ENCODE measurements at regions of chr7 and their contacts with region 1.

Region 1: GRCh38 chr7:50954716-50955115 is 172.0 kb upstream of the GRB10 start:
- DNase-seq: no peak
- H3K4me3 ChIP-seq: no peak overlapping the region
- H3K27ac ChIP-seq: no peak overlapping the region
- H3K4me1 ChIP-seq: no peaks in the 10 kb centered on the region
- H3K27me3 ChIP-seq: no peaks in the 10 kb centered on the region
- CTCF ChIP-seq: no peak

Region 2: GRCh38 chr7:50544992-50545391 is 409.7 kb before region 1 on chr7:
- CTCF ChIA-PET with region 1: no interaction called
- dilution Hi-C with region 1: no loop called
- in situ Hi-C with region 1: no loop called
- intact Hi-C with region 1: no loop called
- DNase-seq: no peak
- H3K4me3 ChIP-seq: no peak overlapping the region
- H3K27ac ChIP-seq: no peak overlapping the region
- H3K4me1 ChIP-seq: no peaks in the 10 kb centered on the region
- H3K27me3 ChIP-seq: no peaks in the 10 kb centered on the region
- CTCF ChIP-seq: no peak

Region 3: DNA sequence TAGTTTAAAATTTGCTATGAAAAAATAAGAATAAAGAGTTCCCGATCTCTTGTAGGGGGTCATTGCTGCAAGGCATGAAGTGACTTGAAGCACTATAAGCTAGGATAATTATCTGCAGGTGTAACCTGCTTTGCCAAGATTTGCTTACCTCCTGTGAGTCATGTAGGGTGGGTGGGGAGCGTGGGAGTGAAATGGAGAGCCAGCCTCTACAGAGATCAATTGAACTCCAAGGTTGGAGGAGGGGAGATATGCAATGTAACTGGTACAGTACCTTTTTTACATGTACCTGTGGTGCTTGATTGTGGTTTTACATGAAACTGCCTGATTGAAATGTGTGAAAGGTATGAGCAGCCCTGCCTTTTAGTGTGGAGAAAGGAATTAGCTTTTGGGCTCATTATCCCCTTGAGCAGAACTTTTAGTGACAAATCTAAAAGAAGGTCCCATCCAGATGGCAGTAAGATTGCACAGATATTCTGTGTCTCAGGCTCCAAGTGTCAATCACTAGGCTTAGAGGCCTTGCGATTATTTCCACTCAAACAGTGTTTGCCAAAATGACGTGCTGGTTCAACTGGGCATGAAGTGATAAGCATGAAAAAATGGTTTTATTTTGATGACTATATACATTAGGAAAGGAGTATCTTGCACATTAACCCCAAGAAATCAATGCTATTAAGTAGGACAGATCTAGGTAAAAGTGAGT is 33.5 kb before region 1 on chr7:
- CTCF ChIA-PET with region 1: no interaction called
- dilution Hi-C with region 1: loop called (anchors 5 kb)
- in situ Hi-C with region 1: no loop called
- intact Hi-C with region 1: no loop called
- DNase-seq: peak; percentile 16
- H3K4me3 ChIP-seq: no peak overlapping the region
- H3K27ac ChIP-seq: no peak overlapping the region
- H3K4me1 ChIP-seq: peaks cover 4% of the 10 kb centered on the region
- H3K27me3 ChIP-seq: no peaks in the 10 kb centered on the region
- CTCF ChIP-seq: no peak

Region 4: DNA sequence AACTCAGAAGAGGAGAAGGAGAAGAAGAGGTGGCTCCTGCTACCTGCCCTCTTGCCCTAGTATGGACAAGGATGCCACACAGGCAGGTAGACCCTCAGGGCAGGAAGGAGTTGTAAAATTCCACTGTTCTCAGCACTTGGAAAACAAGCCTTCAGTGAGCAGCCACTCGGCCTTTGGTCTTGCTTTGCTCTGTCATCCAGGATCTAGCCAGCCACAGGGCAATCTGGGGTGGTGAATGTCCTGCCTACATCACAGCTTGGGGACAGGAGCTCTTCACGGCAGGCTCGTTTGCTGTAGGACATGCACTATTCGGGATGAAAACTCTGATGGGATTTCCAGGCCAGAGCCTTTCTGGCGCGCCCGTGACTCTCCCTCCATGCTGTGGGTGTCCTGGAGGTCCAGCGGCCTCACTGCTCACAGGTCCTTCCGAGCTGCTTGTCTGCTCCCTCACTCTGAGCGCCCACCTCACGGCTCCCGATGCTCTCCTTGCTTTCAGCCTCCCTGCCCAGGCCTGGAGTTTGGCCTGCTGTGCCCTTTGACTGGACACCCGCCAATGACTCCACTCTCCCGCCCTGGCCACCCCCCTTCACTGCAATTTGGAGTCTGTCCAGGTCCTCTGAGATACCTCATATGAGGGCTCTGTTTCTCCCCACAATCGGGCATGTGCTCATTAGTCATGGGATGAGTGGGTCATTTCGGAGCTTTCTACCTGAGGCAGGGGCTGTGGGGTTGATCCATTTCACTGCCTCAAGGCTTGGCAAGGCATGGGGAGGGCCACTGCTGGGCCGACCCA is 55.2 kb after region 1 on chr7:
- CTCF ChIA-PET with region 1: no interaction called
- dilution Hi-C with region 1: loop called (anchors 5 kb)
- in situ Hi-C with region 1: no loop called
- intact Hi-C with region 1: no loop called
- DNase-seq: peak; percentile 8
- H3K4me3 ChIP-seq: no peak overlapping the region
- H3K27ac ChIP-seq: no peak overlapping the region
- H3K4me1 ChIP-seq: no peaks in the 10 kb centered on the region
- H3K27me3 ChIP-seq: no peaks in the 10 kb centered on the region
- CTCF ChIP-seq: no peak